ENCODE measurements at regions of chr13 and their contacts with region 1.

Region 1: DNA sequence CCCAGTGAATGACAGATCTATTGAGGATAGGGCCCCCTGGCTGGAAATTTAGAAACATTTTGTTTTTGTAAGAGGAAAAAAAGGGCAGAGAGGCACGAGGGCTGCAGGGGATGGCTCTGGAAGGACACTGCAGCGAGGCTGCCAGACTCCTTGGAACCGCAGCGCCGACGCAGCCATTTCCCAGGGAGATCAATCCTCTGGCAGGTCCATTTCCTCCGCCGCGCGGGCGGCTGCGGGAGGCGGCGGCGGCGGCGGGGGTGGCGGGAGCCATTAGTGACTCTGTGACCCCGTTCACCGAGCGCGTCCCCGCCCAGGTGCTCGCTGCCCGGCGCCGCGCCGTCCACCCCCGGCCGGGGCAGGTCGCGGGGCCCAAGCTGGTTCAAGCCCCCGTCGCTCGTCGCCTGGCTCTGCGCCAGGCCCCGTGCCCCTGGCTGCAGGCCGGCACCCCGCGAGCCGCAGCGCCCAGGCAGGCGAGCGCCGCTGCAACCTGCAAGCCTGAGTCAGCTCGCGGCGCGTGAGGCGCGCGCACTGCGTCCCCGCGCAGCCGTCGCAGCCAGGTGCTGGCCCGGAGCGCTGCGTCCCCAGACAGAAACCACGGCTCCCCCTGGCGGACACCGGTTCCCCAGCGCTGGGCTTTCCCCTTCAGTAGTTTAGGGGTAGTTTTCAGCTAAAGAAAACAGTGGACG is 192.6 kb downstream of the KATNAL1 start:
- DNase-seq: peak; percentile 89
- ATAC-seq: peak; percentile 95
- H3K4me3 Mint-ChIP-seq: peak overlapping the region; percentile 81
- H3K27ac Mint-ChIP-seq: no peak overlapping the region
- H3K4me1 Mint-ChIP-seq: peaks cover 25% of the 10 kb centered on the region
- H3K27me3 Mint-ChIP-seq: peaks cover 15% of the 10 kb centered on the region
- CTCF ChIP-seq: no peak

Region 2: GRCh38 chr13:29508130-29508875 is 606.4 kb before region 1 on chr13:
- CTCF ChIA-PET with region 1: interaction called, 35 read pairs
- POLR2A ChIA-PET with region 1: no interaction called
- intact Hi-C with region 1: loop called (anchors 1 kb)
- DNase-seq: peak; percentile 62
- ATAC-seq: peak; percentile 85
- H3K4me3 Mint-ChIP-seq: no peak overlapping the region
- H3K27ac Mint-ChIP-seq: peak overlapping the region; percentile 46
- H3K4me1 Mint-ChIP-seq: peaks cover 5% of the 10 kb centered on the region
- H3K27me3 Mint-ChIP-seq: peaks cover 17% of the 10 kb centered on the region
- CTCF ChIP-seq: peak; percentile 73

Region 3: GRCh38 chr13:29771247-29771646 is 343.5 kb before region 1 on chr13:
- CTCF ChIA-PET with region 1: interaction called, 247 read pairs
- POLR2A ChIA-PET with region 1: interaction called, 7 read pairs
- intact Hi-C with region 1: loop called (anchors 1 kb)
- DNase-seq: no peak
- ATAC-seq: peak; percentile 49
- H3K4me3 Mint-ChIP-seq: no peak overlapping the region
- H3K27ac Mint-ChIP-seq: no peak overlapping the region
- H3K4me1 Mint-ChIP-seq: peaks cover 5% of the 10 kb centered on the region
- H3K27me3 Mint-ChIP-seq: no peaks in the 10 kb centered on the region
- CTCF ChIP-seq: peak; percentile 29

Region 4: GRCh38 chr13:29923554-29924481 is 190.9 kb before region 1 on chr13:
- CTCF ChIA-PET with region 1: interaction called, 7 read pairs
- POLR2A ChIA-PET with region 1: no interaction called
- intact Hi-C with region 1: loop called (anchors 2 kb)
- DNase-seq: peak; percentile 40
- ATAC-seq: peak; percentile 65
- H3K4me3 Mint-ChIP-seq: no peak overlapping the region
- H3K27ac Mint-ChIP-seq: no peak overlapping the region
- H3K4me1 Mint-ChIP-seq: no peaks in the 10 kb centered on the region
- H3K27me3 Mint-ChIP-seq: peaks cover 5% of the 10 kb centered on the region
- CTCF ChIP-seq: peak; percentile 85

Region 5: DNA sequence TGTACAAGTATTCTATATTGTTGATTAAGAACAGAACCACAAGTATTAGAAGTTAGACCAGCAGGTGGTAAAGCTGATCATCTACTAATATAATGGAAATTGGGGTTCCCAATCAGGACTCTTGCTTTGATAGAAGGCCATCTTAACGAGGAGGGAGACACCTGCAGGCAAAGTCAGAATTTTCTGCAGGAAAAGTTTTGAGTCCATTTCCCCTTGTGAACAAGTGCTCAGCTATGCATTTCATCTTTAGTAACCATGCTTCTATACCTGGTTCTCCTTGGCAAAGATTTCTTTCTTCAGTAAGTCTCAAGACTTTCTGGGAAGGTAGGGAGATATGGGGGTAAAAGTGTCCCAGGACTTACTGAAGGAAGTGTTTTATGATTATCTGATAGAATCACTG is 466.9 kb after region 1 on chr13:
- CTCF ChIA-PET with region 1: interaction called, 10 read pairs
- POLR2A ChIA-PET with region 1: no interaction called
- intact Hi-C with region 1: no loop called
- DNase-seq: no peak
- ATAC-seq: no peak
- H3K4me3 Mint-ChIP-seq: no peak overlapping the region
- H3K27ac Mint-ChIP-seq: no peak overlapping the region
- H3K4me1 Mint-ChIP-seq: peaks cover 9% of the 10 kb centered on the region
- H3K27me3 Mint-ChIP-seq: no peaks in the 10 kb centered on the region
- CTCF ChIP-seq: no peak

Region 6: GRCh38 chr13:30639671-30640070 is 525.0 kb after region 1 on chr13:
- CTCF ChIA-PET with region 1: no interaction called
- POLR2A ChIA-PET with region 1: no interaction called
- intact Hi-C with region 1: no loop called
- DNase-seq: no peak
- ATAC-seq: no peak
- H3K4me3 Mint-ChIP-seq: no peak overlapping the region
- H3K27ac Mint-ChIP-seq: no peak overlapping the region
- H3K4me1 Mint-ChIP-seq: peaks cover 30% of the 10 kb centered on the region
- H3K27me3 Mint-ChIP-seq: no peaks in the 10 kb centered on the region
- CTCF ChIP-seq: no peak